OCI-LY7 (cell line): ENCODE measurements at regions of chr4 and their contacts with region 1.

Region 1: DNA sequence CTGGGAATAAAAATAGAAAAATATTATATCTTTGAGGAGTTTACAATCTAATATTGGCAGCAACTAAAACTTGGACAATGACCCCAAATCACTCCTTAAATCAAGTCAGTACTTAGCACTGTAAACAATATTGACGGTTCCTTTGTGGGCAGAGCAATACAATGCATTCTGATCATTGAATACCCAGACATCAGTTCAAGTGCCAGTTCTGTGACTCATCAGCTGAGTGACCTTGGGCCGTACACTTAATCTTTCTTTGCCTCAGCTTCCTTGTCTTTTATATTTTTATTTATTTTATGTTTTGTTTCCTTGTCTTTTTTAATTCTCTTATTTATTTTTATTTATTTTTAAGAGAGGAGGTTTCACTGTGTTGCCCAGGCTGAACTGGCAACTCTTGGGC is 112.2 kb upstream of the ANXA3 start:
- DNase-seq: no peak
- H3K4me3 ChIP-seq: no peak overlapping the region
- H3K27ac ChIP-seq: no peak overlapping the region
- H3K4me1 ChIP-seq: no peaks in the 10 kb centered on the region
- CTCF ChIP-seq: no peak

Region 2: DNA sequence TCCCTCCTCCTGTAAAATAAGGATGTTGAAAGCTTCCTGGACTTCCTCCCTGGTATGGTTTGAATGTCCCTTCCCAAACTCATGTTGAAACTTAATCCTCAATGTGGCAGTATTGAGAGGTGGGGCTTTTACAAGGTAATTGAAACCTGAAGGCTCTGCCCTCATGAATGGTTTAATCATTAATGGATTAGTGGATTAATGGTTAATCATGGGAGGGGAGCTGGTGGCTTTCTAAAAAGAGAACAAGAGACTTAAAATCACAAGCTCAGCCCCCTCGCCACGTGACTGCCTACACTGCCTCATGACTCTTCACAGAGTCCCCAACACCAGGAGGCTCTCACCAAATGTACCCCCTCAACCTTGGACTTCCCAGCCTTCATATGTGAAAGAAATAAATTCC is 12.4 kb before region 1 on chr4:
- CTCF ChIA-PET with region 1: interaction called, 3 read pairs
- POLR2A ChIA-PET with region 1: interaction called, 14 read pairs
- intact Hi-C with region 1: no loop called
- DNase-seq: no peak
- H3K4me3 ChIP-seq: no peak overlapping the region
- H3K27ac ChIP-seq: no peak overlapping the region
- H3K4me1 ChIP-seq: no peaks in the 10 kb centered on the region
- CTCF ChIP-seq: no peak

Region 3: DNA sequence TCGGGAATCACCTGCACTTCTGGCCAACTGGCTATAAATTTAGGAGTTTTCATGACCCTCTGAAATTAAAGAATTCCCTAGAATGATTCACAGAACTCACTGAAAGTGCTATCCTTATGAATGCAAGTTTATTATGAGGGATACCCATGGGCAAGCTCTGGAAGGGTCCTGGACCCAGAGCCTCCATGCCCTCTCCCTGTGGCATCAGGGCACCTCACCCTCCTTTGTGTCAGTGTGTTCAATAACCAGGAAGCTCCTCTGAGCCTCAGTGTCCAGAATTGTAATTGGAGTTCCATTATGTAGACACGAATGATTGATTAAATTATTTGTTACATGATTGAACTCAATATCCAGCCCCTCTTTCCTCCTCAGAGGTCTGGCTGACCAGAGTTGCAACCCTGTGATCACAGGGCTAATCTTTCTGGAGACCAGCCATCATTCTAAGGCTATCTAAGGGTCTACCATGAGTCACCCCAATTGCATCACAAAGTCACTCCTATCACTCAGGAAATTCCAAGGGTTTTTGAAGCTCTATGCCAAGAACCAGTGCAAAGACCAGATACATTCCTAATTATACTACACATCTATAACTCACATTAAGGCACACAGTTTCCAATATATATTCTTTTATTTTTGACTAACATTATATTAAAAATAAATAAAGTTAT is 121.1 kb after region 1 on chr4:
- CTCF ChIA-PET with region 1: no interaction called
- POLR2A ChIA-PET with region 1: no interaction called
- intact Hi-C with region 1: no loop called
- DNase-seq: no peak
- H3K4me3 ChIP-seq: no peak overlapping the region
- H3K27ac ChIP-seq: no peak overlapping the region
- H3K4me1 ChIP-seq: no peaks in the 10 kb centered on the region
- CTCF ChIP-seq: no peak